Spleen (tissue), 13 donors: ENCODE measurements at regions of chr5 and their contacts with region 1.

Region 1: GRCh38 chr5:40736103-40736875 is 19.5 kb downstream of the TTC33 start:
- DNase-seq: no peak
- H3K4me3 ChIP-seq: no peak overlapping the region
- H3K27ac ChIP-seq: no peak overlapping the region
- H3K4me1 ChIP-seq: peaks cover 0 to 36% (median 25%) of the 10 kb centered on the region in 6 donors
- H3K27me3 ChIP-seq: no peaks in the 10 kb centered on the region
- CTCF ChIP-seq: peak in 10 of 11 experiments; percentile 36 to 74 (median 62)
- POLR2A ChIP-seq: no peak

Region 2: DNA sequence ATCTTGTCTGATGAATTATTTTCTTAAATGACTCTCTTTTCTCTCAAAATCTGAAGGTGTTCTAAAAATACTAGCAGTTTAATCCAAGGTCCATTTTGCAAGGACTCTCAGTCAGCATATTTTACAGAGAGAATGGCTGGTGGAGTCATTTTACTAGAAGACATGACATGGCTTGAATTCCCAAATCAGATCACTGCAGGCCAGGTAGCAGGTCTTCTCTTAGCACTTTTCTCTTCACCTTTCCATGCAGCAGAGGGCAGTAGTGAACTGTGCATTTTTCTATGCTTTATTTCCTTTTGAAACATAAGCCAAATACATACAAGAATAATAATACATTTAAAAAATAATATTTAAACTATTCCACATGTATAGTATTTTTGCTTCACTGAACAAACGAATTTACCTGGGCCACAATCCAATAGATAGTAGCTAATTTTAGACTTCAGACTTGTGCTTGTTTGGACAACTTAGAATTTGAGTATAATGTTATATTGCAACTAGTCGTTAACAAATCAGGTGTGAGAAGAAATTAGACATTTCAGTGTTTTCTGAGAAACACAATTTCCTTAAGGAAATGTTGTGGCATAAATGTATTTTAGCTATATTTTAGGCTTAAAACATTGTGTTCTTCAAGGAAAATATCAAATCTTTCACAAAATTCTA is 1022.1 kb before region 1 on chr5:
- intact Hi-C with region 1: loop called (anchors 10 kb)
- DNase-seq: no peak
- H3K4me3 ChIP-seq: no peak overlapping the region
- H3K27ac ChIP-seq: no peak overlapping the region
- H3K4me1 ChIP-seq: peaks cover 0 to 10% (median 0%) of the 10 kb centered on the region in 6 donors
- H3K27me3 ChIP-seq: no peaks in the 10 kb centered on the region
- CTCF ChIP-seq: peak in 9 of 11 experiments; percentile 18 to 69 (median 50)
- POLR2A ChIP-seq: no peak

Region 3: DNA sequence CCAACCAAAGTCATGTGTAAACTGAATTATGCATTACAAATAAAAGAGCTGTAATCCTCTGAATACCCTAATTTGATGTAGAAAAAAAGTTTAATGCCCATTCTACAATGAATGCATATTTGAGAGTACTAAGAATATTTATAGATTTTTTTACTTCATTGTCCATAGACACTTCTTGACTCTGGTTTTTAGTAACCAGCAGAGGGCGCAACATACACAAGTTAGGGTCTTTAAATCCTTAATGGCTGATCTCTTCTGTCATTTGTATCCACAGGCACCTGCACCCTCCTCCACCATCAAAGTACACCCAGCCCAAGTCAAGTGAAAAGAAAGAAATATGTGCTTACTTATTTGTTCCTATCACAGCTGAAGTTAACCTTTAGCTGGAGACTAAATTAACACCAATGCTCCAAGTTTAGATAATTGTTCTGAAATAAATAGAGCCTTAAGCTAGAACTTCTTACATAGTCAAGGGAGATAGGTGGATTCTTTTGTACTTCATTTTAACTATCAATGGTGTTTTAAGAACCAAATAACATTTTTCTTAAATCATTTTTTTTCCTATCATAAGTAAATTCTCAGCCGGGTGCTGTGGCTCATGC is 787.3 kb before region 1 on chr5:
- intact Hi-C with region 1: loop called (anchors 5 kb)
- DNase-seq: no peak
- H3K4me3 ChIP-seq: no peak overlapping the region
- H3K27ac ChIP-seq: peak overlapping the region in 3 of 8 donors; percentile 71 to 82 (median 77)
- H3K4me1 ChIP-seq: peaks cover 0 to 13% (median 0%) of the 10 kb centered on the region in 6 donors
- H3K27me3 ChIP-seq: no peaks in the 10 kb centered on the region
- CTCF ChIP-seq: peak; percentile 49 to 80 (median 65)
- POLR2A ChIP-seq: no peak